Ovary (tissue), 10 donors: ENCODE measurements at regions of chr7 and their contacts with region 1.

Region 1: GRCh38 chr7:128862571-128863432 is at the start of gene ATP6V1F:
- DNase-seq: peak; percentile 97 to 100 (median 99)
- H3K4me3 ChIP-seq: peak within 1 kb of the TSS; percentile 88
- H3K27ac ChIP-seq: peak within 1 kb of the TSS; percentile 28 to 36
- H3K4me1 ChIP-seq: peaks cover 10% of the 10 kb centered on the region
- H3K27me3 ChIP-seq: no peaks in the 10 kb centered on the region
- CTCF ChIP-seq: peak in 1 of 3 donors; percentile 15
- EP300 ChIP-seq: no peak
- POLR2A ChIP-seq: peak; percentile 65
- total RNA-seq, gene ATP6V1F: 57.3 to 108 (median 85.0) TPM

Region 2: DNA sequence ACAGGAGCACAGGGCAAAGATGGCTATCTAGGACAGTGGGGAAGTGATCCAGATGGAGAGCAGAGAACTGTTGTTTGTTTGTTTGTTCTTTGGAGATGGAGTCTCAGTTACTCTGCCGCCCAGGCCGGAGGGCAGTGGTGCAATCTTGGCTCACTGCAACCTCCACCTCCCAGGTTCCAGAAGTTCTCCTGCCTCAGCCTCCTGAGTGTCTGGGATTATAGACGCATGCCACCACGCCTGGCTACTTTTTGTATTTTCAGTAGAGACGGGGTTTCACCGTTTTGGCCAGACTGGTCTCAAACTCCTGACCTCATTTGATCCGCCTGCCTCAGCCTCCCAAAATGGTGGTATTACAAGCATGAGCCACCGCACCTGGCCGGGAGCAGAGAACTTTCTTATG is 365.4 kb before region 1 on chr7:
- intact Hi-C with region 1: no loop called
- DNase-seq: no peak
- H3K4me3 ChIP-seq: no peak overlapping the region
- H3K27ac ChIP-seq: no peak overlapping the region
- H3K4me1 ChIP-seq: no peaks in the 10 kb centered on the region
- H3K27me3 ChIP-seq: no peaks in the 10 kb centered on the region
- CTCF ChIP-seq: no peak
- EP300 ChIP-seq: no peak
- POLR2A ChIP-seq: no peak

Region 3: DNA sequence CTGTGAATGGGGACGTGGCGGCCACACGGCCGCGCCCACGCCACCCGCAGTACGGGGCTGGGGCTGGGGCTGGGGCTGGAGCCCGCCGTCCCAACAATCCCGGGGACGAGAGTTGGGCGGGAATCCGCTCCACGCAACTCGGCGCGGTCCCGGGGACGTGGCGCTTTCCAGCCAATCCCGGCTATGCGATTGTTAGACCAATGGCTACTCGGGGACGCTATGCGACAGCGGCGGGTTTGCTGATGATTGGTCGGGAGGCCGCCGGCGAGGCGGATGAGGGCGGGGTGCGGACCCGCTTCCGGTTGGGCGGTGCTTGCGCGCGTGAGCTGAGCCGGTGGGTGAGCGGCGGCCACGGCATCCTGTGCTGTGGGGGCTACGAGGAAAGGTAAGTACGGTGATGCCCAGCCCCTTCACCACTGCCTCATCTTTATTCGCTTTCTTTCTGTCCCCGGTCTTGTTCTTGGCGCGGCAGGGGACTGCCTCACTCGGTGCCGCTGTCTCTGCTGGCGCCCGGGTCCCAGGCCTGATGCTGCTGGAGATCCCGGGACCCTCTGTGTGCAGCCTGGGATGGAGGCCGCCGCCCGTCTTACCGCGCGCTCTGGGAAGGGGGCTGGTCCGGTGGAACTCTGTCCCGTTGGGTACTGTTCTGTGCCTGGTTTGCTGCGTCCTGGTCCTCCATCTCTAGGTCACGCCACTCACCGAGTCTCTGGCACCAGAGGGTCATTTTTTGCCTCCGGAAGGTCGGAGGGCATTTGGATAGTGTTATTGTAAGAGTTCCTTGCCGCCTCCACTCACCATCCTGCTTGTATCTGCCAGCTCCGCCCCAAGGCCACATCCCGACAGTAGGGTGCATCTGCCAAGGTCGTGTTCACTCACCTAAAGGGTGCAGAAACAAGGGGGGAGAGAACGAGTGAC is 123.5 kb before region 1 on chr7 and contains the start of gene CALU:
- intact Hi-C with region 1: loop called in 1 of 4 experiments (anchors 5 kb)
- DNase-seq: peak; percentile 95 to 97 (median 96)
- H3K4me3 ChIP-seq: peak within 1 kb of the TSS; percentile 89
- H3K27ac ChIP-seq: peak within 1 kb of the TSS; percentile 50 to 80
- H3K4me1 ChIP-seq: peaks cover 3% of the 10 kb centered on the region
- H3K27me3 ChIP-seq: no peaks in the 10 kb centered on the region
- CTCF ChIP-seq: no peak
- EP300 ChIP-seq: no peak
- POLR2A ChIP-seq: peak; percentile 88
- total RNA-seq, gene CALU: 48.9 to 110 (median 71.0) TPM

Region 4: DNA sequence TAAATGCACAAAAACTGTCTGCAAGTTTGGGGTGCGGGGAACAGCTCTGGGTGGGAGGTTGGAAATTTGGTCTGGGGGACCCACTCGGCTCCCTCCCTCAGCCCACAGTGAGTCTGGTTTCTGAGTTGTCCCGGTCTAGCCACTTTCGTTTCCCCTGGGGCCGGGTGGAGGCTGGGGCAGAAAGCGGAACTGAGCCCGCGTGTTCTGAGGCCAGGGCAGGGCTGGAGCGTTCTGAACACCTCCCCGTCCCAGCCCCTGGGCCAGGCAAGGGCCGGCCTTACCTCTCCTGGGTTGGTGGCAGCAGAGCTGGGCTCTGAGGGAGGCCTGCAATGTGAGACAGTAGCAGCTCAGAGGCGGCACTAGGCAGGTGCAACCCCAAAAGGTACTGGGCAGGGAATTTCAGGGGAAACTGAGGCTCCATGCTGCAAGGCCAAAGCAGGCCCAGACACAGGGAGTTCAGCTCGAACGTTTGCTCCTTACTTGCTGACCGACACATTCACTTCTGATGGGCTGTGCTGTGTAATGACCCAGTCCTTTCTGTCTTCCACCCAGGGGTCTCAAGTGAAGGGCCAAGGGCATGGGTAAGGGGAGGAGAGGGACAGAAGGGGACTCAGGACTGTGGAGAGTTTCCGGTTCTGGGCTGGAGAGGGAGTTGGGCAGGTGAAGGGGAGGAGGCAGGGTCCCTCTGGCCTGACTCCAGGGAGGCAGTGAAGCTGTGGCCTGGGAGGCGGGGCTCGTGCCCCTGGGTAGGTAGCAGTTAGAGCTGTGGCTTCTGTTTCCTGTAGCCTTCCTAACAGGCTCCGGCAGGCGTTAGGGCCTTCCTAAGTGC is 77.9 kb after region 1 on chr7:
- intact Hi-C with region 1: no loop called
- DNase-seq: no peak
- H3K4me3 ChIP-seq: no peak overlapping the region
- H3K27ac ChIP-seq: no peak overlapping the region
- H3K4me1 ChIP-seq: no peaks in the 10 kb centered on the region
- H3K27me3 ChIP-seq: no peaks in the 10 kb centered on the region
- CTCF ChIP-seq: no peak
- EP300 ChIP-seq: no peak
- POLR2A ChIP-seq: no peak

Region 5: DNA sequence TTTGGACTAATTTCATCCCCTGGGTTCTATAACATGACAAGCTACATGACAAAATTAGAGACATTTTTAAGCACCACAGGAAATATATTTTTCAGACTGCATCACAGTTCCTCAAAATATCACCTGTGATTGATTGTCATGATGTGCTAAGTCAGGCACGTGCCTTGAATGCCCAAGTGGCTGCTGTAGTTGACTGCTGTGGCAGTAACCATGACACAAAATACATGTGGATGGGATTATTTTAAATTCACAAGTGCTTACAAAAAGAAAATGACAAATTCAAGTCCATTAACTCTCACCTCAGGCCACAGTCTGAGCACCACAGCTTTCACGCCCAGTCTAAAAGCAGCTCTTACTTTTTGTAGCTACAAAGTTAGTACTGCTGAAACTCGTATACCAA is 146.6 kb after region 1 on chr7:
- intact Hi-C with region 1: no loop called
- DNase-seq: no peak
- H3K4me3 ChIP-seq: no peak overlapping the region
- H3K27ac ChIP-seq: no peak overlapping the region
- H3K4me1 ChIP-seq: no peaks in the 10 kb centered on the region
- H3K27me3 ChIP-seq: no peaks in the 10 kb centered on the region
- CTCF ChIP-seq: no peak
- EP300 ChIP-seq: no peak
- POLR2A ChIP-seq: no peak

Region 6: DNA sequence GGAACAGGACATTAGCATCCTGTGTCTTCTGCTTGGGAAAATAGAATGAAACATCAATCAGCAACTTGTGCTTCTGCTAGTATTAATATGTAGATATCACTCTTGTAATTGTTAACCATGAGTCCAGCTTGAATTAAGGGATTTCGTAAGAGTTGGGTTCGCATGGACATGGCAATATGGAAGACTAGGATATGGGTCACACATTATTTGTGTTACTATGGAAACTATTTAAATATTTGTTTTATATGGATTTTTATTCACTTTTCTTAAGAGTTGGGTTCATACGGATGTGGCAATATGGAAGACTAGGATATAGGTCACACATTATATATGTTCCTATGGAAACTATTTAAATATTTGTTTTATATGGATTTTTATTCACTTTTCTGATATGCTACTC is 167.6 kb after region 1 on chr7:
- intact Hi-C with region 1: no loop called
- DNase-seq: no peak
- H3K4me3 ChIP-seq: no peak overlapping the region
- H3K27ac ChIP-seq: no peak overlapping the region
- H3K4me1 ChIP-seq: no peaks in the 10 kb centered on the region
- H3K27me3 ChIP-seq: no peaks in the 10 kb centered on the region
- CTCF ChIP-seq: no peak
- EP300 ChIP-seq: no peak
- POLR2A ChIP-seq: no peak